ENCODE measurements at regions of chr16 and their contacts with region 1.

Region 1: GRCh38 chr16:48064971-48065370 is 90.8 kb downstream of the ABCC12 start:
- DNase-seq: no peak
- ATAC-seq: no peak
- H3K4me3 ChIP-seq: no peak overlapping the region
- H3K27ac ChIP-seq: no peak overlapping the region
- H3K4me1 ChIP-seq: no peaks in the 10 kb centered on the region
- H3K27me3 ChIP-seq: no peaks in the 10 kb centered on the region
- CTCF ChIP-seq: no peak
- EP300 ChIP-seq: no peak
- POLR2A ChIP-seq: no peak
- RAD21 ChIP-seq: no peak

Region 2: DNA sequence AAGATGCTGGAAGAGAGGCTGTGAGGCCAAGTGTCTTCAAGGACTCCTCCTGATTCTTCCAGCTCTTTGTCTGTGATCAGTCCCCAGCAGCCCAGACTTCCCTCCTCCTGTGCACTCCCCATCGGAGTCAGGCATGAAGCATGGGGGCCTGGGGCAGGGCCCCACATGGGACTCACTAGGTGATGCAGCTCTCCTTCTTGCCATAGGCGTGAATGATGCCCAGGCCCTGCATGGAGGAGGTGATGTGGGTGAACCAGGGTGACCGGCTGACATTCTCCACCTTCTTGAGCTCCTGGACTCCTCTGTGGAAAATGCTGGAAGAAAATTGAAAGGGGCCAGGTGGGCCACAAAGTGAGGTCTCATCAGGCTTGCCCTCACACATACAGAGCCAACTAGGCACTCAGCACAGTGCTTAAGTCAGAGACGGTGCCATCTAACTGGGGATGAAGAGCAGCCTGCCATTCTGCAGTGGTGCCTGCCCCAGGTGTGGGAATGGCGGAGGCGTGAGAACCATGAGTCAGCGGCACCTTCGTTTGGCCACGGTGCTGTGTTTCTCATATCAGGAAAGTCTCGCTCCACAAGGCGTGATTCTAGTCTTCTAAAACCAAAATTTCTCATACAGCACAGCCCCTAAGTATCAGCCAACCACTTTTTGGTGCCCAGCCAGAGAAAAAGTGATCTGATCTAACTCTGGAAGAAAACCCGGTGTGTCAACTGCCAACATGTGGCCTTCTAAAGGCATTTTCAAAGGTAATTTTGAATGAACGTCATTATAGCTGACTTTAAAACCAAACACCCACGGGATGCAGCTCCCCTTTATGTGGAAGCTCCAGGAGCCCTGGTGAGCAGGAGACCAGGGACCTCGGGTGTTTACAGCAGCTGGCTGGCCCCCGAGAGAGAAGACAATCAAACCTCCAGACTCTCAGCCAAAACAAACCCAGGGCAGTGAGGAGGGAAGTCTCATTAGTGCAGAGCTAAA is 36.0 kb after region 1 on chr16:
- CTCF ChIA-PET with region 1: interaction called, 11 read pairs
- POLR2A ChIA-PET with region 1: interaction called, 3 read pairs
- RAD21 ChIA-PET with region 1: interaction called, 6 read pairs
- SMC1A ChIA-PET with region 1: interaction called, 3 read pairs
- in situ Hi-C with region 1: no loop called
- intact Hi-C with region 1: no loop called
- DNase-seq: peak; percentile 74
- ATAC-seq: peak; percentile 80
- H3K4me3 ChIP-seq: no peak overlapping the region
- H3K27ac ChIP-seq: peak overlapping the region; percentile 33
- H3K4me1 ChIP-seq: peaks cover 25% of the 10 kb centered on the region
- H3K27me3 ChIP-seq: no peaks in the 10 kb centered on the region
- CTCF ChIP-seq: no peak
- EP300 ChIP-seq: peak in 1 of 2 experiments; percentile 83; a peak in 2 of 4 replicates
- POLR2A ChIP-seq: no peak
- RAD21 ChIP-seq: no peak

Measured in GM12878 (cell line).